Panc1 (cell line): ENCODE measurements at regions of chr18 and their contacts with region 1.

Region 1: GRCh38 chr18:52700816-52701215 is 360.8 kb downstream of the DCC start:
- DNase-seq: no peak
- ATAC-seq: no peak
- H3K4me3 ChIP-seq: no peak overlapping the region
- H3K27ac ChIP-seq: no peak overlapping the region
- H3K4me1 ChIP-seq: no peaks in the 10 kb centered on the region
- H3K27me3 ChIP-seq: no peaks in the 10 kb centered on the region
- CTCF ChIP-seq: no peak

Region 2: GRCh38 chr18:52897611-52898484 is 197.0 kb after region 1 on chr18:
- CTCF ChIA-PET with region 1: no interaction called
- POLR2A ChIA-PET with region 1: no interaction called
- in situ Hi-C with region 1: no loop called
- intact Hi-C with region 1: no loop called
- DNase-seq: no peak
- ATAC-seq: no peak
- H3K4me3 ChIP-seq: no peak overlapping the region
- H3K27ac ChIP-seq: no peak overlapping the region
- H3K4me1 ChIP-seq: no peaks in the 10 kb centered on the region
- H3K27me3 ChIP-seq: no peaks in the 10 kb centered on the region
- CTCF ChIP-seq: no peak

Region 3: DNA sequence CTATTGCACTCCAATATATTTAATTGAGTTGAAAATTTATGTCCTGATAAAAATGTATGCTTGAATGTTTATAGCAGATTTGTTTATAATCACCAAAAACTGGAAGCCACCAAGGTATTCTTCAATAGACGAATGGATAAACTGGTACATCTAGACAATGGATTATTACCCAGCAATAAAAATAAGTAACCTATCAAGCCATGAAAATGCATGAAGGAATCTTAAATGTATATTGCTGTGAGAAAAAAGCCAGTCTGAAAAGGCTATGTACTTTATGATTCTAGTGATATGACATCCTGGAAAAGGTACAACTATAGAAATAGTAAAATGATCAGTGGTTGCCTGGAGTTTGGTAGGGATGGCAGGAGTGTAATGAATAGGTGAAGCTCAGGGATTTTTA is 219.8 kb after region 1 on chr18:
- CTCF ChIA-PET with region 1: no interaction called
- POLR2A ChIA-PET with region 1: no interaction called
- in situ Hi-C with region 1: no loop called
- intact Hi-C with region 1: no loop called
- DNase-seq: no peak
- ATAC-seq: no peak
- H3K4me3 ChIP-seq: no peak overlapping the region
- H3K27ac ChIP-seq: no peak overlapping the region
- H3K4me1 ChIP-seq: no peaks in the 10 kb centered on the region
- H3K27me3 ChIP-seq: no peaks in the 10 kb centered on the region
- CTCF ChIP-seq: no peak

Region 4: GRCh38 chr18:53165770-53166169 is 465.0 kb after region 1 on chr18:
- CTCF ChIA-PET with region 1: no interaction called
- POLR2A ChIA-PET with region 1: no interaction called
- in situ Hi-C with region 1: no loop called
- intact Hi-C with region 1: loop called (anchors 5 kb)
- DNase-seq: no peak
- ATAC-seq: no peak
- H3K4me3 ChIP-seq: no peak overlapping the region
- H3K27ac ChIP-seq: no peak overlapping the region
- H3K4me1 ChIP-seq: no peaks in the 10 kb centered on the region
- H3K27me3 ChIP-seq: no peaks in the 10 kb centered on the region
- CTCF ChIP-seq: no peak